ENCODE measurements at regions of chr19 and their contacts with region 1.

Region 1: GRCh38 chr19:10747271-10747670 is 29.4 kb downstream of the DNM2 start:
- DNase-seq: no peak
- H3K4me3 ChIP-seq: no peak overlapping the region
- H3K27ac ChIP-seq: no peak overlapping the region
- H3K4me1 ChIP-seq: peaks cover 1% of the 10 kb centered on the region
- CTCF ChIP-seq: no peak

Region 2: DNA sequence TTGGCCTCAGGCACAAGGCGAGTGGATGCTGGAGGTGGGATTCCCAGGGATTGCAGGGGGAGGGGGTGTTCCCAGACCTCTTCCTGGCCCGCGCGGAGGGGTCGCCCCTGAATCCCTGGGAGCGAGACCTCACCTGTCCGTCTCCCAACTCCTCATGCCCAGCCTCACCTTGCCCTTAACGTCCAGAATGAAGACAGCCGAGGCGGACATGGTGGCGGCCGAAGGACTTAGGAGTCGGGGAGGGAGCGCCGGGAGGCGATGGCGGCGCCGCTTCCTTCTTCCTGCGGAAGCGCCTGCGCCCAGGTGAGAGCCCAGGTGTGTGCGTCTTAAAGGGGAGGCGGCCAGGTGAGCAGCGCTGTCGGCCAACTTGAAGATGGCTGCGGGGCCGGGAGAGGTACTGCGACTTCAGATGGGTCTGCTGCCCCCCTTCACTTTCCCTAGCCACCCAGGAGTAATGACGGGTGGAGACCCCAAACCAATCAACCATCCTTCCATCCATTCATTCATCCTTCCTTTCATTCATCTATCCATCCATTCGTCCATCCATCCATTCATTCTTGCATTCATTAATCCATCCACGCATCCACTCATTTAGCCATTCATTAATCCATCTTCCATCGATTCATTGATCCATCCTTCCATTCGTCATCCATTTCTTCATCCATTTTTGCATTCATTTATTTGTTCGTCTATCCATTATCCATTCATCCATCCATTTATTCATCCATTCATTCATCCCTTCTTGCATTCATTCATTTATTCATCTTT is 160.1 kb before region 1 on chr19 and contains the start of gene AP1M2:
- CTCF ChIA-PET with region 1: no interaction called
- POLR2A ChIA-PET with region 1: no interaction called
- intact Hi-C with region 1: no loop called
- DNase-seq: no peak
- H3K4me3 ChIP-seq: no peak within 1 kb of the TSS
- H3K27ac ChIP-seq: no peak within 1 kb of the TSS
- H3K4me1 ChIP-seq: peaks cover 28% of the 10 kb centered on the region
- CTCF ChIP-seq: no peak
- total RNA-seq, gene AP1M2: 0.44 TPM in 1 of 2 replicates, not detected in the other

Region 3: DNA sequence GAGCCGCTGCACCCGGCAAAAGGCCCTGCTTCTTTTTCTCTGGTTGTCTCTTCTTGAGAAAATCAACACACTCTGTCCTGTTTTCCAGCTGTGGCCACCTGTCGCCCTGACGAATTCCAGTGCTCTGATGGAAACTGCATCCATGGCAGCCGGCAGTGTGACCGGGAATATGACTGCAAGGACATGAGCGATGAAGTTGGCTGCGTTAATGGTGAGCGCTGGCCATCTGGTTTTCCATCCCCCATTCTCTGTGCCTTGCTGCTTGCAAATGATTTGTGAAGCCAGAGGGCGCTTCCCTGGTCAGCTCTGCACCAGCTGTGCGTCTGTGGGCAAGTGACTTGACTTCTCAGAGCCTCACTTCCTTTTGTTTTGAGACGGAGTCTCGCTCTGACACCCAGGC is 359.2 kb after region 1 on chr19:
- CTCF ChIA-PET with region 1: interaction called, 10 read pairs
- POLR2A ChIA-PET with region 1: no interaction called
- intact Hi-C with region 1: no loop called
- DNase-seq: no peak
- H3K4me3 ChIP-seq: no peak overlapping the region
- H3K27ac ChIP-seq: no peak overlapping the region
- H3K4me1 ChIP-seq: no peaks in the 10 kb centered on the region
- CTCF ChIP-seq: no peak

Measured in OCI-LY7 (cell line).